Activated CD4-positive, alpha-beta T cell treated with anti-CD3 and anti-CD28 coated beads for 36 hours (primary cell): ENCODE measurements at regions of chr1 and their contacts with region 1.

Region 1: GRCh38 chr1:89547563-89548485 is 23.2 kb downstream of the LRRC8B start:
- DNase-seq: peak; percentile 70
- ATAC-seq: peak; percentile 48
- H3K4me3 Mint-ChIP-seq: peak overlapping the region; percentile 20
- H3K27ac Mint-ChIP-seq: peak overlapping the region; percentile 95
- H3K4me1 Mint-ChIP-seq: peaks cover 86% of the 10 kb centered on the region
- H3K27me3 Mint-ChIP-seq: no peaks in the 10 kb centered on the region

Region 2: DNA sequence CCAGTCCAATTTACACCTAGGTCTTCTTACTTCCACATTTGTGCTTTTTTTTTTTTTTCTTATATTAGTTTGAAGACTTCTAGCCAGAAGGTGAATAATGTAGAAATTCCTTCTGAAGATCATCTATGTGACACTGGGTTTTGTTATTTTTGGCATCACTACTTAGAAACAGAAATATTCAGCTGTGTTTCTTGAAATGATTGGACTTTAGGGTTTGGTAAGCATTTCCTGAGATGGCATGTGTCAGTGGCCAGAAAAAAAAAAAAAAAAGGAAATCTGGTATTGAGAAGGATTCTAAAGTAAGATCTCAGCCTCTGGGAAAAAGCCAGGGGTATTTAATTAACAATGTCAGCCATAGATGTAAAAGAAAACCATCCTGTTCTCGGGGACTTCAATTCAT is 41.7 kb after region 1 on chr1:
- CTCF ChIA-PET with region 1: interaction called, 3 read pairs
- POLR2A ChIA-PET with region 1: interaction called, 9 read pairs
- intact Hi-C with region 1: loop called in 1 of 2 experiments (anchors 1 kb)
- DNase-seq: no peak
- ATAC-seq: peak; percentile 30
- H3K4me3 Mint-ChIP-seq: no peak overlapping the region
- H3K27ac Mint-ChIP-seq: peak overlapping the region; percentile 84
- H3K4me1 Mint-ChIP-seq: peaks cover 91% of the 10 kb centered on the region
- H3K27me3 Mint-ChIP-seq: no peaks in the 10 kb centered on the region

Region 3: GRCh38 chr1:89615676-89616598 is 68.1 kb after region 1 on chr1:
- CTCF ChIA-PET with region 1: interaction called, 6 read pairs
- POLR2A ChIA-PET with region 1: interaction called, 10 read pairs
- intact Hi-C with region 1: no loop called
- DNase-seq: peak; percentile 46
- ATAC-seq: no peak
- H3K4me3 Mint-ChIP-seq: no peak overlapping the region
- H3K27ac Mint-ChIP-seq: no peak overlapping the region
- H3K4me1 Mint-ChIP-seq: peaks cover 86% of the 10 kb centered on the region
- H3K27me3 Mint-ChIP-seq: no peaks in the 10 kb centered on the region